PC-9 (cell line): ENCODE measurements at regions of chr6 and their contacts with region 1.

Region 1: GRCh38 chr6:150600301-150601017 is 774 bp downstream of the PLEKHG1 start:
- DNase-seq: peak; percentile 65 to 78
- H3K4me3 ChIP-seq: peak overlapping the region; percentile 95
- H3K27ac ChIP-seq: peak overlapping the region; percentile 51; the same call in 1 of the 2 replicates
- H3K4me1 ChIP-seq: peaks cover 8% of the 10 kb centered on the region
- H3K27me3 ChIP-seq: no peaks in the 10 kb centered on the region
- CTCF ChIP-seq: peak; percentile 69

Region 2: GRCh38 chr6:150417899-150418826 is 182.3 kb before region 1 on chr6:
- CTCF ChIA-PET with region 1: interaction called, 9 read pairs
- POLR2A ChIA-PET with region 1: no interaction called
- intact Hi-C with region 1: loop called (anchors 1 kb)
- DNase-seq: peak in 1 of 2 experiments; percentile 84
- H3K4me3 ChIP-seq: peak overlapping the region; percentile 52; the same call in 1 of the 2 replicates
- H3K27ac ChIP-seq: peak overlapping the region; percentile 91
- H3K4me1 ChIP-seq: peaks cover 30% of the 10 kb centered on the region
- H3K27me3 ChIP-seq: no peaks in the 10 kb centered on the region
- CTCF ChIP-seq: peak; percentile 76

Region 3: DNA sequence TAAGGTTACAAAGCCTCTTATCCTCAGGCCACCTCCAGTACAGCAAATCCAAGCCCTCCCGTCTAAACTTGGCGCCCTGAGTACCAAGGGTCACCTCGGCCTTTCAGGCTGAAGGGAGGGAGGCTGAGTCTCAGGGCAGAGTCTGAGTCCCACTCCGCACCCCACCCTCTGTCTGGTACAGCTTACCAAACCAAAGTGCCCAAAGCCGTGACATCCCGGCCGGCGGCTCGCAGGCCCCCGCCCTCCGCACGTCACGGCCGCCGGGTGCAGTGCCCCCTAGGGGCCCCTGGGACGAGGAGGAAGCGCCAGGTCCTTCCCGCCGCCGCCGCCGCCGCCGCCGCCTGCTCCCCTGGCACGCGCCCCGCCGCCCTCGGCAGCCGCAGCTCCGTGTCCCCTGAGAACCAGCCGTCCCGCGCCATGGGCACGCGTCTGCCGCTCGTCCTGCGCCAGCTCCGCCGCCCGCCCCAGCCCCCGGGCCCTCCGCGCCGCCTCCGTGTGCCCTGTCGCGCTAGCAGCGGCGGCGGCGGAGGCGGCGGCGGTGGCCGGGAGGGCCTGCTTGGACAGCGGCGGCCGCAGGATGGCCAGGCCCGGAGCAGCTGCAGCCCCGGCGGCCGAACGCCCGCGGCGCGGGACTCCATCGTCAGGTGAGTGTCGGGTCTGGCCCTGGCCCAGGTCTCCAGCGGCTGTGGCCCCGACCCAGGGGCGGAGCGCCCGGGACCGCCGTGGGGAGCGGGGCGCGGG is 265.1 kb after region 1 on chr6 and contains the start of gene MTHFD1L:
- CTCF ChIA-PET with region 1: interaction called, 11 read pairs
- POLR2A ChIA-PET with region 1: no interaction called
- intact Hi-C with region 1: no loop called
- DNase-seq: peak; percentile 62 to 75
- H3K4me3 ChIP-seq: peak within 1 kb of the TSS; percentile 63
- H3K27ac ChIP-seq: peak within 1 kb of the TSS; percentile 78
- H3K4me1 ChIP-seq: peaks cover 4% of the 10 kb centered on the region
- H3K27me3 ChIP-seq: no peaks in the 10 kb centered on the region
- CTCF ChIP-seq: peak; percentile 55
- total RNA-seq, gene MTHFD1L: 53.3 and 65.8 TPM in 2 replicates